ENCODE measurements at regions of chr2 and their contacts with region 1.

Region 1: GRCh38 chr2:231191896-231192872 is 6.2 kb upstream of the ARMC9 start:
- DNase-seq: peak; percentile 85

Region 2: DNA sequence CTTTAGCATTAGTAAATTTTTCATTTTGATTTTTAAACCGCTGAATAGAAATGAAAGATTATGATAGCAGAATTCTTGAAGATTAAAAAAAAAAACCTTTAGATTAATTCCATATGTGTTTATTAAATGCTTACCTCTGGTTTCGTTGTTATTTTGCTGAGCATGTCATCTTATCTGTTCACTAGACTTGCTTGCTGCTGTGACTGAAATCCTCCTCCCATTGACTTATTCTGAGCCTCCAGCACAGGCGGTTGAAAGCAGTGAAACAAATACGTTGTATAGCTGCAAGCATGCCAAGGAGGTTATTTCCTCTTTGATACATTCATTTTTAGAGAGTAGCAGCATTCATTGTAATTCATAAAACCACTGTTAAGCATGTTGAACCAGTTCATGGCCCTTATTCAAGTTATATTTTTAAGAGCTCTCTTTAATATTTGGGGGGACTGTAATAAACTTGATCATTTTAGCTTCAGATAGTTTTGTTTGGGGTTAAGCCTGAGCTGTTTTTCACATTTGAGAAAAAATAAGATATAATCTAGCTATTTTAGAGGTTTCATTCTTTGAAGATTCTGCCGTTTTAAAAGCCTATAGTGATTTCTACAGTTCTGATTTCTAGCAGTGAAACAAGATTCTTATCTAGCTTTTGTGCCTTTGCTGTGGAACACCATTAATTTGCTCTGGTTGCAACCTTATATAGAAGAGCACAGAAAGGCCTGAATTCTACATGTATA is 67.2 kb before region 1 on chr2 and contains the start of gene HTR2B:
- intact Hi-C with region 1: loop called (anchors 5 kb)
- DNase-seq: no peak
- total RNA-seq, gene HTR2B: 2.9 TPM

Region 3: DNA sequence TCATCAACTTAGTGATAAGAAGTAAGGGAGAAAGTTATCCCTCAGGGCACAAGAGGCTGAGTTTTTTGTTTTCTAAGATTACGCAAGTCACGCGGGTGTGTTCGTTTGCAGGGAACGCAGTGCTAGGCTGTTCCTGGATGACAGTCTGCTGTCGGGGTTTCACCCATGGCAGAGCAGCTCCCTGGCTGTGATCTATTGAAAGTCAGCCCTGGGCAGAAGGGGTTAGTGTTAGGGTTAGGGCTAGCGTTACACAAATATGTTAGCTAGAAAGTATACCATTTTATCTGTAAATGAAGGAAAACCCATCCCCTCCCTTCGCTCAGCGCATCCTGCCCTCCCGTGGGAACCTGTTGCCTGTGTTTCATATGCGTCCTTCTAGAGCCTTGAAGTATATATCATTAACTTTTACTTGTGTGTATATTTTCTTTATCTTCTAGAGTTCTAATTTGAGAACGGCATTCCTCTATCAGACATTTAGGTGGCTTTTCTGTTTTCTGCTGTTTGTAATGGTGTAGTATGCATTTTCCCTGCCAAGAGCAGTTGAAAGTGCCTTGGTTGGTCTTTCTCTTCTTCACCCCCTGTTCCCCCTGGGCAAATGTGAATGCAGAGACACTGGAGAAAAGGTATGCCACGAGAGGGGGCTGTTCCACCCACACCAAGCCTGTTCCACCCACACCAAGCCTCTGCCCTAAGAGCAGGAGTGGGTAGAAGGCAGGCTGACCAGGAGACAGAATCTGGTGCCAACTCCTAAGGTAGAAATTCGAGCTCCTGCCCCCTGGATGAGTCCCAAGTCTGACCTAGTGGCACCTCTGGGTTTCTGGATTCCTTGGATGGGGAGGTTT is 53.3 kb after region 1 on chr2:
- intact Hi-C with region 1: no loop called
- DNase-seq: peak; percentile 72

Measured in cardiac septum (tissue), 1 donor.